ENCODE measurements at regions of chr12 and their contacts with region 1.

Region 1: GRCh38 chr12:6953442-6954315 is 2.5 kb downstream of the PTPN6 start:
- DNase-seq: peak; percentile 61 to 77 (median 63)
- ATAC-seq: peak; percentile 36 to 67 (median 46)
- H3K4me3 ChIP-seq: peak overlapping the region; percentile 27 to 48 (median 31)
- H3K27ac ChIP-seq: peak overlapping the region; percentile 15 to 80 (median 77)
- H3K4me1 ChIP-seq: no peaks in the 10 kb centered on the region
- H3K27me3 ChIP-seq: no peaks in the 10 kb centered on the region
- CTCF ChIP-seq: no peak
- POLR2A ChIP-seq: peak; percentile 57

Region 2: GRCh38 chr12:6883252-6883651 is 70.4 kb before region 1 on chr12:
- intact Hi-C with region 1: no loop called
- DNase-seq: no peak
- ATAC-seq: no peak
- H3K4me3 ChIP-seq: no peak overlapping the region
- H3K27ac ChIP-seq: no peak overlapping the region
- H3K4me1 ChIP-seq: peaks cover 0 to 21% (median 2%) of the 10 kb centered on the region in 4 donors
- H3K27me3 ChIP-seq: no peaks in the 10 kb centered on the region
- CTCF ChIP-seq: no peak
- POLR2A ChIP-seq: no peak

Region 3: GRCh38 chr12:7018350-7019042 is 64.8 kb after region 1 on chr12 and contains the start of gene LPCAT3:
- intact Hi-C with region 1: no loop called
- DNase-seq: peak; percentile 98 to 99 (median 99)
- ATAC-seq: peak; percentile 89 to 96 (median 92)
- H3K4me3 ChIP-seq: peak within 1 kb of the TSS; percentile 80 to 93 (median 81)
- H3K27ac ChIP-seq: peak within 1 kb of the TSS; percentile 78 to 84 (median 80)
- H3K4me1 ChIP-seq: peaks cover 0 to 35% (median 3%) of the 10 kb centered on the region in 4 donors
- H3K27me3 ChIP-seq: no peaks in the 10 kb centered on the region
- CTCF ChIP-seq: peak; percentile 84 to 95 (median 92)
- POLR2A ChIP-seq: peak; percentile 97
- total RNA-seq, gene LPCAT3: 50.6 to 115 (median 77.5) TPM

Region 4: DNA sequence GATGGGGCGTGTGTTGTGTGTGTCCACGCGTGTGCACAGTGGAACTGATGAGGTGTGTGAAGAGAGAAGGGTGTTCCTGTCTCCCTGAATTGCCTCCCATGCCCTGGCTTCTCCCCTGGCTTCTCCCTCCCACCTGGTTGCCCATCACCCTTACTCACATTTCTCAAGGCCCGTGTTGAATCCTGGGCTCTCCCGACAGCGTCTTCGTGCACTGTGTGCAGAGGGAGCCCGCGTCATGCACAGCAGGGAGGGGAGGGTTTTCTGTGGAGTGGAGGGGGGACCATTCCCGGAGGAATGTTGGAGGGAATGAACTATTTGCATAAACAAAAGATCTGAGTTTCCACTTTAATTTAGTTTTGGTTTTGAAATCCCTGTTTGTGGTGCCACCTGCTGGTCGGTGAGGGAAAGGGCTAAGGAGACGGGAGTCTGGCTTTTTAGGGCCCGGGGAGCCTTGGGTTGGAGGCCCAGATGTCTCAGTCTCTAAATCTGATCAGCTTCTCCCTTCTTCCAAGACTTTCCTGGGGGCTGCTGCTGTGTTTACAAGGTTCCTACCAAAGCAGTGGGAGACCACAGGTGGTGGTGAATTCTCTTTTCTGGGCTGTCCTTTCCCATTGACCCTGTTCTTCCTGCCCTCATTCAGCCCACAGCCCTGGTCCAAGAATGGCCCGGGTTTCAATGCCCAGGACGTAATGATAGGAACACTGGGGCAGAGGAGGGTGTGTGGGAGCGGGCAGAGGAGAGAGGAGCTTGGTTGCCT is 138.7 kb after region 1 on chr12 and contains the start of gene C1R:
- intact Hi-C with region 1: loop called in 1 of 2 experiments (anchors 10 kb)
- DNase-seq: peak; percentile 86 to 90 (median 86)
- ATAC-seq: peak; percentile 65 to 81 (median 73)
- H3K4me3 ChIP-seq: peak within 1 kb of the TSS; percentile 56 to 90 (median 81)
- H3K27ac ChIP-seq: peak within 1 kb of the TSS; percentile 84 to 94 (median 84)
- H3K4me1 ChIP-seq: peaks cover 0 to 51% (median 14%) of the 10 kb centered on the region in 4 donors
- H3K27me3 ChIP-seq: no peaks in the 10 kb centered on the region
- CTCF ChIP-seq: peak; percentile 90 to 93 (median 92)
- POLR2A ChIP-seq: peak; percentile 58
- total RNA-seq, gene C1R: 1,157 to 2,557 (median 1,950) TPM